Activated CD8-positive, alpha-beta T cell treated with anti-CD3 and anti-CD28 coated beads for 36 hours (primary cell): ENCODE measurements at regions of chr11 and their contacts with region 1.

Region 1: DNA sequence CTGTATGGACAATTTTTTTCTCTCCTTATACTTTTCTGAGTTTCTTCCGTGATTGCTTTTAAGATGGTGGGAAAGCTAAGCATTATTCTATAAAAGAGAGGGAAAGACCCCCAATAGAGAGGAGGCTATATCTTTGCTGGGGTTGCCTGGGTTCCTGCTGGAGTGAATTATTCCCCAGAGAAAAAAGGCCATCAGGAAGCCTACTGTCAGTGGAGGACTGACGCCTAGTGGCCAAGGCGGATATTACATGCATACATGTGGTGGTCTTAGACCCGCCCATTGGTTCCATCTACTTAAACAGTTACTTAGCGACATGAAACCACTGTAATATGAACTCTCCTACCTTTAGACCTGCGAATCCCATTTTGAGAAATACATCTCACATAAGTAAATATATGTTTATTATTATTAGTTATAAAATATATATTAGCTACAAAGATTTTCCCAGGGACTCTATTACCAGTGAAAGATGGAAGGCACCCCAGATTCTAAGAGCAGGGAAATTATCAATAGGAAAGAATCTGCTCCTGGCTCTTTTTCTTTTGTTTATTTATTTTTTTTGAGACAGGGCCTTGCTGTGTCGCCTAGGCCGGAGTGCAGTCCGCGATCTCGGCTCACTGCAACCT is 15.7 kb upstream of the PGA3 start:
- DNase-seq: peak; percentile 95
- ATAC-seq: peak; percentile 100
- H3K4me3 Mint-ChIP-seq: no peak overlapping the region
- H3K27ac Mint-ChIP-seq: no peak overlapping the region
- H3K4me1 Mint-ChIP-seq: peaks cover 3% of the 10 kb centered on the region
- H3K27me3 Mint-ChIP-seq: no peaks in the 10 kb centered on the region
- CTCF ChIP-seq: peak; percentile 98

Region 2: GRCh38 chr11:60913793-60914632 is 273.6 kb before region 1 on chr11 and contains the start of gene TMEM109:
- CTCF ChIA-PET with region 1: interaction called, 11 read pairs
- POLR2A ChIA-PET with region 1: no interaction called
- intact Hi-C with region 1: loop called (anchors 5 kb)
- DNase-seq: peak; percentile 91
- ATAC-seq: peak; percentile 72
- H3K4me3 Mint-ChIP-seq: peak within 1 kb of the TSS; percentile 90
- H3K27ac Mint-ChIP-seq: peak within 1 kb of the TSS; percentile 97
- H3K4me1 Mint-ChIP-seq: peaks cover 71% of the 10 kb centered on the region
- H3K27me3 Mint-ChIP-seq: no peaks in the 10 kb centered on the region
- CTCF ChIP-seq: no peak
- total RNA-seq, gene TMEM109: 93.2 to 101 TPM

Region 3: GRCh38 chr11:60964801-60965200 is 222.8 kb before region 1 on chr11:
- CTCF ChIA-PET with region 1: interaction called, 5 read pairs
- POLR2A ChIA-PET with region 1: no interaction called
- intact Hi-C with region 1: loop called (anchors 5 kb)
- DNase-seq: no peak
- ATAC-seq: no peak
- H3K4me3 Mint-ChIP-seq: no peak overlapping the region
- H3K27ac Mint-ChIP-seq: no peak overlapping the region
- H3K4me1 Mint-ChIP-seq: no peaks in the 10 kb centered on the region
- H3K27me3 Mint-ChIP-seq: no peaks in the 10 kb centered on the region
- CTCF ChIP-seq: no peak

Region 4: DNA sequence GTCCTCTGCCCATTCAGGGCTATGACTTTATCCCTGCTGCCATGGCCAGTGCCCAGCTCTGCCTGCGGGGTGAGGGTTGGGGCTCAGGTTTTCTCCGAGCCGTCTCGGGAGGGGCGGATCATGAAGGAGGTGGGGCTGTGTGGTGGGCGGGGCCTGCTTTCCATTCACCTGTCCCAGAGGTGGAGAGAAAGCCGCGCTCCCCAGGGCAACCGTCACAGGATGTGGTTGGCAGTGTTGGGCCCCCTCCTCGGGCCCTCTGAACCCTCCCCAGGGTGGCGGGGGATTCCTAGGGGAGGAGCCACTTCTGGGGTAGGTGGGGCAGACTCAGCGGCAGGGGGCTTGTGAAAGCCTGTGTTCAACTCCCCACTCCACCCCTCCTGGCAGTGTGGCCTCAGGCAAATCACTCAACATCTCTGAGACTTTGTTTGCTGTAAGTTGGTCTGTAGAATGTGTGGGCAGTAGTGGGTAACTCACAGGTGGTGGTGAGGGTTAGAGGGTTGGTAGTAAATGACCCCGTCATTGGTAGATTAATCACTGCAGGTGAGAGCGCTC is 165.9 kb before region 1 on chr11:
- CTCF ChIA-PET with region 1: interaction called, 11 read pairs
- POLR2A ChIA-PET with region 1: no interaction called
- intact Hi-C with region 1: no loop called
- DNase-seq: peak; percentile 92
- ATAC-seq: peak; percentile 63
- H3K4me3 Mint-ChIP-seq: peak overlapping the region; percentile 64
- H3K27ac Mint-ChIP-seq: peak overlapping the region; percentile 88
- H3K4me1 Mint-ChIP-seq: peaks cover 81% of the 10 kb centered on the region
- H3K27me3 Mint-ChIP-seq: no peaks in the 10 kb centered on the region
- CTCF ChIP-seq: no peak

Region 5: GRCh38 chr11:61141601-61142028 is 46.0 kb before region 1 on chr11:
- CTCF ChIA-PET with region 1: interaction called, 10 read pairs
- POLR2A ChIA-PET with region 1: no interaction called
- intact Hi-C with region 1: loop called (anchors 10 kb)
- DNase-seq: no peak
- ATAC-seq: no peak
- H3K4me3 Mint-ChIP-seq: no peak overlapping the region
- H3K27ac Mint-ChIP-seq: no peak overlapping the region
- H3K4me1 Mint-ChIP-seq: peaks cover 12% of the 10 kb centered on the region
- H3K27me3 Mint-ChIP-seq: no peaks in the 10 kb centered on the region
- CTCF ChIP-seq: no peak

Region 6: GRCh38 chr11:61149624-61150619 is 37.7 kb before region 1 on chr11:
- CTCF ChIA-PET with region 1: interaction called, 12 read pairs
- POLR2A ChIA-PET with region 1: no interaction called
- intact Hi-C with region 1: no loop called
- DNase-seq: no peak
- ATAC-seq: no peak
- H3K4me3 Mint-ChIP-seq: no peak overlapping the region
- H3K27ac Mint-ChIP-seq: no peak overlapping the region
- H3K4me1 Mint-ChIP-seq: peaks cover 27% of the 10 kb centered on the region
- H3K27me3 Mint-ChIP-seq: no peaks in the 10 kb centered on the region
- CTCF ChIP-seq: no peak

Region 7: DNA sequence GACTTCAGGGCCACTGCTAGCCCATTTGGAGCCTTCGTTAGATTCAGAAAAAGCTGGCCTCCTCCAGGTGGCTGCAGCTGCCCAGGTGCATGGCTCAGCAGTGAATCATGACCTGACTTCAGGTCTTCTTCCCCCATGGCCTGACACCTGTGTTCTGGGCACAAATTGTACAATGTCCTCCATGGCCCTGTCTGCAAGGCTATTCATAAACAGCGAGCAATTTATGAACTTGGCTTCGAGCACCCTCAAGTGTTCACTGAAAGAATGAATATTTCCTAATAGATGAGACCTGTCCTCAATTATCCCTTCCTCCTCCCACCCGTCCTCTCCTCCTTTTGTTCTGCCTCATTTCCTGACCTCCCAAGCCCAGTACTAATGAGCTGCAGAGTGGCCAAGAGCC is 14.2 kb before region 1 on chr11:
- CTCF ChIA-PET with region 1: interaction called, 31 read pairs
- POLR2A ChIA-PET with region 1: interaction called, 3 read pairs
- intact Hi-C with region 1: no loop called
- DNase-seq: no peak
- ATAC-seq: no peak
- H3K4me3 Mint-ChIP-seq: no peak overlapping the region
- H3K27ac Mint-ChIP-seq: no peak overlapping the region
- H3K4me1 Mint-ChIP-seq: peaks cover 17% of the 10 kb centered on the region
- H3K27me3 Mint-ChIP-seq: no peaks in the 10 kb centered on the region
- CTCF ChIP-seq: no peak